Transverse colon (tissue), 4 donors: ENCODE measurements at regions of chr10 and their contacts with region 1.

Region 1: GRCh38 chr10:69237528-69238159 is 17.5 kb downstream of the HKDC1 start:
- DNase-seq: peak; percentile 92
- H3K4me3 ChIP-seq: no peak overlapping the region
- H3K27ac ChIP-seq: no peak overlapping the region
- H3K4me1 ChIP-seq: peaks cover 0 to 20% (median 6%) of the 10 kb centered on the region in 4 donors
- H3K27me3 ChIP-seq: no peaks in the 10 kb centered on the region
- CTCF ChIP-seq: peak; percentile 86 to 99 (median 90)
- EP300 ChIP-seq: no peak
- POLR2A ChIP-seq: no peak

Region 2: GRCh38 chr10:68988530-68989316 is 248.9 kb before region 1 on chr10 and contains the start of gene KIFBP:
- in situ Hi-C with region 1: no loop called
- intact Hi-C with region 1: no loop called
- DNase-seq: peak; percentile 94
- H3K4me3 ChIP-seq: peak within 1 kb of the TSS; percentile 68 to 89 (median 74)
- H3K27ac ChIP-seq: peak within 1 kb of the TSS; percentile 88 to 93 (median 89)
- H3K4me1 ChIP-seq: peaks cover 5 to 45% (median 33%) of the 10 kb centered on the region in 4 donors
- H3K27me3 ChIP-seq: no peaks in the 10 kb centered on the region
- CTCF ChIP-seq: peak in 4 of 5 experiments; percentile 20 to 47 (median 36)
- EP300 ChIP-seq: no peak
- POLR2A ChIP-seq: peak; percentile 93
- total RNA-seq, gene KIFBP: 20.2 to 31.2 (median 22.6) TPM

Region 3: GRCh38 chr10:69318106-69318866 is 80.6 kb after region 1 on chr10:
- in situ Hi-C with region 1: loop called in 1 of 4 experiments (anchors 10 kb)
- intact Hi-C with region 1: no loop called
- DNase-seq: peak; percentile 94
- H3K4me3 ChIP-seq: peak overlapping the region; percentile 80 to 84 (median 82)
- H3K27ac ChIP-seq: peak overlapping the region; percentile 94 to 97 (median 96)
- H3K4me1 ChIP-seq: peaks cover 15 to 42% (median 26%) of the 10 kb centered on the region in 4 donors
- H3K27me3 ChIP-seq: no peaks in the 10 kb centered on the region
- CTCF ChIP-seq: peak in 1 of 5 experiments; percentile 15
- EP300 ChIP-seq: no peak
- POLR2A ChIP-seq: no peak

Region 4: GRCh38 chr10:69352569-69353264 is 115.1 kb after region 1 on chr10:
- in situ Hi-C with region 1: no loop called
- intact Hi-C with region 1: no loop called
- DNase-seq: no peak
- H3K4me3 ChIP-seq: no peak overlapping the region
- H3K27ac ChIP-seq: no peak overlapping the region
- H3K4me1 ChIP-seq: peaks cover 4 to 24% (median 21%) of the 10 kb centered on the region in 4 donors
- H3K27me3 ChIP-seq: no peaks in the 10 kb centered on the region
- CTCF ChIP-seq: no peak
- EP300 ChIP-seq: no peak
- POLR2A ChIP-seq: no peak

Region 5: GRCh38 chr10:69392481-69393000 is 154.9 kb after region 1 on chr10:
- in situ Hi-C with region 1: loop called (anchors 5 to 10 kb)
- intact Hi-C with region 1: loop called (anchors 2 kb)
- DNase-seq: peak; percentile 88
- H3K4me3 ChIP-seq: no peak overlapping the region
- H3K27ac ChIP-seq: peak overlapping the region in 1 of 4 donors; percentile 17
- H3K4me1 ChIP-seq: peaks cover 0 to 3% (median 0%) of the 10 kb centered on the region in 4 donors
- H3K27me3 ChIP-seq: no peaks in the 10 kb centered on the region
- CTCF ChIP-seq: peak; percentile 94 to 98 (median 96)
- EP300 ChIP-seq: no peak
- POLR2A ChIP-seq: no peak

Region 6: DNA sequence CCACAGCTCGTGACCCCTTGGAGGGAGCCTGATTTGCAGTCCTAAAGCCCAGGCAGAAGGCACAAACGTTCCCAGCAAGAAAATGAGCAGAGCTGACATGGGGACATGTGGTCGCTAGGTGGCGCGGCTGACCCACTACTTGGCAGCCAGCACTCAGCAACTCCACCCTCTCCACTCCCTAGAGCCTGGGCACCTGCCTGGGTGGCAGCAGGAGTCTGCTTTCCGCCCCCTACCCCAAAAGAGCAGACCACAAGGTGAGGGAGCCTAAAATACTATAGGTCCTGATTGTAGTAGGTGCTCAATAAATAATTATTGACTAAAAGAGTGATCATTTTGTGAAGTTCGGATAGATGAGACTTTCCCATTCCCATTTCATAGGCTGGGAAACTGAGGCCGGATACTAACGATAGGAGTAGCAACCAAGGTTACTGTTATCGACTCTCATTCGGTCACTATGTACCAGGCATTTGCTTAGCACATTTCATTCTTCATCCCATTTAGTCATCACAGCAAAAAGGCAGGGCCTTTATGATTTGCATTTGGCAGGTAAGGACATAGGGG is 278.1 kb after region 1 on chr10:
- in situ Hi-C with region 1: loop called in 2 of 4 experiments (anchors 25 kb)
- intact Hi-C with region 1: no loop called
- DNase-seq: peak; percentile 77
- H3K4me3 ChIP-seq: no peak overlapping the region
- H3K27ac ChIP-seq: no peak overlapping the region
- H3K4me1 ChIP-seq: no peaks in the 10 kb centered on the region
- H3K27me3 ChIP-seq: no peaks in the 10 kb centered on the region
- CTCF ChIP-seq: peak; percentile 72 to 86 (median 82)
- EP300 ChIP-seq: no peak
- POLR2A ChIP-seq: no peak